Posterior cingulate gyrus (tissue), 11 donors: ENCODE measurements at regions of chr20 and their contacts with region 1.

Region 1: GRCh38 chr20:11917663-11918062 is at the start of gene BTBD3:
- DNase-seq: peak; percentile 36 to 95 (median 66)

Region 2: GRCh38 chr20:11686820-11687543 is 230.7 kb before region 1 on chr20:
- intact Hi-C with region 1: loop called (anchors 10 kb)
- DNase-seq: peak in 9 of 10 donors; percentile 40 to 94 (median 53)